A549 (cell line): ENCODE measurements at regions of chr20 and their contacts with region 1.

Region 1: DNA sequence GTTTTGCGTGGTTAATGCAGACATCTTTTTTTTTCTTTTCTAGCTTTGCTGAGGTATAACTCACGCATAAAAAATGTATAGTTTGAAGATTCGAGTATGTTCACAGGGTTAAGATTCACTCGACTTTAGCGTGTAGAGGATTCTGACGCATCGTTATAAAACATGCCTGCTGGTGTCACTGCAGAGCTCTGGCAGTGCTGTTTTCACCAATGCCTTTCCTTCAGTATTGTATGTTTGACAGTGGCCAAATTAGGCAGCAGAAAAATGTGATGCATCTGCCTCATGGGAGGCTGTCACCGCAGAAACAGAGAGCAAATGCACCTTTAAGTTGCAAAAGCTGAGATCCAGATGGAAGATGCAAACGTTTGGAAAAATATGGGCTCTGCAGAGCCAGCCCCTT is 18.0 kb upstream of the SIRPB2 start:
- DNase-seq: peak; percentile 26 to 39
- ATAC-seq: peak; percentile 89 to 92
- H3K4me3 ChIP-seq: no peak overlapping the region
- H3K27ac ChIP-seq: no peak overlapping the region
- H3K4me1 ChIP-seq: peaks cover 9% of the 10 kb centered on the region; the same call in 1 of the 3 replicates
- CTCF ChIP-seq: peak; percentile 56
- EP300 ChIP-seq: no peak
- POLR2A ChIP-seq: no peak
- RAD21 ChIP-seq: peak; percentile 56 to 65

Region 2: DNA sequence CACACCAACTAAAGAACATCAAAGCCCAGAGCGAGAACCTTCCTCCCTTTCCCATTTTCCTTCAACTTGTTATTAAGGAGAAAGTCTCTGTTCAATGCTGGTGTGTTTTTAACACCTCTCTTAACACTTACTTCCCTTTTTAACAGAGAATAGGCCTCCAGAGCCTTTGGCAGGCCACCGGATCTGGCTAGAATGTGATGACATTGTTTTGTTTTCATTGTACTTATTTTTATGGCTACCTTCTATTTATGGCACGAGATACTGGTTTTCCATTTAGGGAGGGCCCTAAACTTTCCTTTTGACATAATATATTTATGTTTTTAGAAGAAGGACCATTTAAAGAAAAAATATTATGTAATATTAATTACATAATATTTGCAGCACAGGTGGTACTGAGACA is 920.8 kb before region 1 on chr20:
- CTCF ChIA-PET with region 1: no interaction called
- POLR2A ChIA-PET with region 1: interaction called, 10 read pairs
- DNase-seq: no peak
- ATAC-seq: no peak
- H3K4me3 ChIP-seq: no peak overlapping the region
- H3K27ac ChIP-seq: no peak overlapping the region
- H3K4me1 ChIP-seq: no peaks in the 10 kb centered on the region
- CTCF ChIP-seq: no peak
- EP300 ChIP-seq: no peak
- POLR2A ChIP-seq: no peak
- RAD21 ChIP-seq: no peak

Region 3: DNA sequence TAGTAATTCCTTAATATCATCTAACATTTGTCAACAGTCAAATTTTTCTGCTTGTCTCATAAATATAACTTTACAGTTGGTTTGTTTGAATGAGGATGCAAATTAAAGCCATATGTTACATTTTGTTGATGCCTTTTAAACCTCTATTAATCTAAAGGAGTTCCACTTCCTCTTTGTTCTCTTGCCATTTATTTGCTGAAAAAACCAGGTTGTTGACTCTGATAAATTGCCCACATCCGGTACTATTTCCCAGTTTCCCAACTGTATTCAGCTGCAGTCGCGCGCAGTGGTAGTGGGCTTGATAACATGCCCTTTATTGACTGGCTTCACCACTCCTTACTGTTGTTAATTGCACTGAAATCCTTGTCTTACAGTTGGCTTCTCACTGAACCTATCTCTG is 14.8 kb after region 1 on chr20:
- CTCF ChIA-PET with region 1: interaction called, 18 read pairs
- POLR2A ChIA-PET with region 1: no interaction called
- DNase-seq: no peak
- ATAC-seq: no peak
- H3K4me3 ChIP-seq: no peak overlapping the region
- H3K27ac ChIP-seq: no peak overlapping the region
- H3K4me1 ChIP-seq: no peaks in the 10 kb centered on the region
- CTCF ChIP-seq: no peak
- EP300 ChIP-seq: no peak
- POLR2A ChIP-seq: no peak
- RAD21 ChIP-seq: no peak